ENCODE measurements at regions of chr5 and their contacts with region 1.

Region 1: DNA sequence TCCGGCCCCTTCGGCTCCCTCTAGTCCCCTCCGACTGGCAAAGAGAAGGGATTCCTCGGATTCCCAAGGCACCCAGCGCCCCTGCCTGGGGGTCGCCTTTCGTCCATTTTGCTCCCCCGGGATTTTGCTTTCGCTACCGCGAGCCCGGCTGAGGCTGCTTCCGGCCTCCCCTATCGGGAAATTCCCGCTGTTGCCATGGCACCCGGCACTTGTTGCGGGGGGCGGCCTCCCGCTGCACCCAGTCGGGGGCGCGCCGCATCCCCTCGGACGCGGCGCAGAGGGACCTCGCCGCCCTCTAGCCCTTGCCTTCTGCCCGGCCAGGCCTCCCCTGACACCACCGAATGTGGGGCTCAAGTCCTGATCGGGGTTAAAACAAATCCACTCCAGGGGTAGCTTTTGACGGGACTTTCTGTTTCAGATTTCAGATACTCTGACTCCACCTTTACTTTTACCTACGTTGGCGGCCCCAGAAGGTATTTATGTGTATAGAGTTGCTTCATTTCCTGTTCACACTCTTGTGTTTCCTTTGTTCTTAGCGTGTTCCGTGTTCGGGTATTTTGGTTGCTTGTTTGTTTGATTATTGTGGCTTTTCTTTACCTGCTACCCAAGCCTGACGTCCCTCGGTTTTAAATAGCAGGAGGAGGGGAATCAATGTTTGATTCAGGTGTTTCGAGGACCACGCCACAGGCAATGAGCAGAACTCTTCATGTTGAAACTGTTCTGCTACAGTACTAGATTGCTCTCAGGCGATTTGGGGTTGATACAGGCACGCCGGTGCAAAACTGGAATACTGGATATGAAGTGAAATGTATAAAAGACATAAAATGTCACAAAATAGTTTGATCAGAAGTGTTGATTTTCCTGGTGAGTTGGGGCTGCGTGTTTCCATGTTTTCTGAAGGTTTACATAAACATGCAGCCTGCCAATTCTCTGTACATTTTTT is 1.5 kb downstream of the PARP8 start:
- DNase-seq: peak; percentile 54
- H3K4me3 ChIP-seq: peak overlapping the region; percentile 90
- H3K27ac ChIP-seq: peak overlapping the region; percentile 75
- H3K4me1 ChIP-seq: peaks cover 5% of the 10 kb centered on the region
- H3K27me3 ChIP-seq: no peaks in the 10 kb centered on the region
- CTCF ChIP-seq: no peak

Region 2: GRCh38 chr5:50593681-50594080 is 74.2 kb before region 1 on chr5:
- CTCF ChIA-PET with region 1: no interaction called
- POLR2A ChIA-PET with region 1: no interaction called
- intact Hi-C with region 1: loop called (anchors 5 kb)
- DNase-seq: no peak
- H3K4me3 ChIP-seq: no peak overlapping the region
- H3K27ac ChIP-seq: no peak overlapping the region
- H3K4me1 ChIP-seq: peaks cover 26% of the 10 kb centered on the region
- H3K27me3 ChIP-seq: no peaks in the 10 kb centered on the region
- CTCF ChIP-seq: no peak

Measured in PC-9 (cell line).